Activated CD4-positive, alpha-beta T cell treated with anti-CD3 and anti-CD28 coated beads for 36 hours (primary cell): ENCODE measurements at regions of chr7 and their contacts with region 1.

Region 1: GRCh38 chr7:158655931-158656441 is 48.6 kb downstream of the NCAPG2 start:
- DNase-seq: peak; percentile 87
- ATAC-seq: peak; percentile 93
- H3K4me3 Mint-ChIP-seq: no peak overlapping the region
- H3K27ac Mint-ChIP-seq: peak overlapping the region; percentile 83
- H3K4me1 Mint-ChIP-seq: peaks cover 31% of the 10 kb centered on the region
- H3K27me3 Mint-ChIP-seq: no peaks in the 10 kb centered on the region

Region 2: DNA sequence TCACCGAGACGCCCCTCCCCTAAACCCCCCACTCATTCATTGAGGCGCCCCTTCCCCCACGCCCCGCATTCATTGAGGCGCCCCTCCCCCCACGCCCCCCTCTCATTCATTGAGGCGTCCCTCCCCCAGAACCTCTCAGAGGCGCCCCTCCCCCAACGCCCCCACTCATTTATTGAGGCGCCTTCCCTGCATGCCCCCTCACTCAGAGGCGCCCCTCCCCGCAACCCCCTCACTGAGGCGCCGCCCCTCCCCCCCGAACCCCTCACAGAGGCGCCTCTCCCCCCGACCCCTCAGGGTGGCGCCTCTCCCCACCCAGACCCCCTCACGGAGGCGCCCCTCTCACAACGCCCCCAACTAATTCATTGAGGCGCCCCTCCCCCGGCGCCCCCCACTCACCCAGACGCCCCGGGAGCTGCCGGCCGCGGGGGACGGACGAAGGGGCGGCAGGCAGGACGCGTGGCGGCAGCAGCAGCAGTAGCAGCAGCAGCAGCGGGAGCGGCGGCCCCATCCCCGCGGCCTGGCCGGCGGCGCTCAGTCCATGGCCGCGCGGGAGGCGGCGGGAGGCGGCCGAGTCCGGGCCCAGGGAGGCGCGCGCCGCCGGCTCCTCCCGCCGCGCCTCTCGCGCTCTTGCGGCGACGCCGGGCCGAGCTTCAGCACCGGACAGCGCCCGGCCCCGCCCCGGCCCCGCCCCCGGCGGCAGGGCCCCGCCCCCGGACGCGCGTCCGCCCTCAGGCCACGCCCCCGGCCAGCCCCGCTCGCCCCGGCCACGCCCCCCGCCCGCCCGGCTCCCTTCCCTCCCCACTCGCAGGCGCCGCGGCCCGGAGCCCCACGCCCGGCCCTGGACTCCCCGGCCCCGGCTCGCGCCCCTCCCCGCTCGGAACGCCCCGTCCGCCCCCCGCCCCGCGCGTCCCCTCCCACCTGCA is 68.6 kb before region 1 on chr7 and contains the start of gene PTPRN2:
- CTCF ChIA-PET with region 1: no interaction called
- POLR2A ChIA-PET with region 1: no interaction called
- intact Hi-C with region 1: loop called in 1 of 2 experiments (anchors 2 kb)
- DNase-seq: peak; percentile 83
- ATAC-seq: peak; percentile 87
- H3K4me3 Mint-ChIP-seq: peak within 1 kb of the TSS; percentile 38
- H3K27ac Mint-ChIP-seq: no peak within 1 kb of the TSS
- H3K4me1 Mint-ChIP-seq: peaks cover 4% of the 10 kb centered on the region
- H3K27me3 Mint-ChIP-seq: peaks cover 44% of the 10 kb centered on the region
- total RNA-seq, gene PTPRN2: 0.46 to 0.51 TPM

Region 3: GRCh38 chr7:158613481-158613880 is 42.5 kb before region 1 on chr7:
- CTCF ChIA-PET with region 1: no interaction called
- POLR2A ChIA-PET with region 1: no interaction called
- intact Hi-C with region 1: loop called in 1 of 2 experiments (anchors 1 kb)
- DNase-seq: no peak
- ATAC-seq: peak; percentile 67
- H3K4me3 Mint-ChIP-seq: no peak overlapping the region
- H3K27ac Mint-ChIP-seq: no peak overlapping the region
- H3K4me1 Mint-ChIP-seq: peaks cover 19% of the 10 kb centered on the region
- H3K27me3 Mint-ChIP-seq: no peaks in the 10 kb centered on the region

Region 4: DNA sequence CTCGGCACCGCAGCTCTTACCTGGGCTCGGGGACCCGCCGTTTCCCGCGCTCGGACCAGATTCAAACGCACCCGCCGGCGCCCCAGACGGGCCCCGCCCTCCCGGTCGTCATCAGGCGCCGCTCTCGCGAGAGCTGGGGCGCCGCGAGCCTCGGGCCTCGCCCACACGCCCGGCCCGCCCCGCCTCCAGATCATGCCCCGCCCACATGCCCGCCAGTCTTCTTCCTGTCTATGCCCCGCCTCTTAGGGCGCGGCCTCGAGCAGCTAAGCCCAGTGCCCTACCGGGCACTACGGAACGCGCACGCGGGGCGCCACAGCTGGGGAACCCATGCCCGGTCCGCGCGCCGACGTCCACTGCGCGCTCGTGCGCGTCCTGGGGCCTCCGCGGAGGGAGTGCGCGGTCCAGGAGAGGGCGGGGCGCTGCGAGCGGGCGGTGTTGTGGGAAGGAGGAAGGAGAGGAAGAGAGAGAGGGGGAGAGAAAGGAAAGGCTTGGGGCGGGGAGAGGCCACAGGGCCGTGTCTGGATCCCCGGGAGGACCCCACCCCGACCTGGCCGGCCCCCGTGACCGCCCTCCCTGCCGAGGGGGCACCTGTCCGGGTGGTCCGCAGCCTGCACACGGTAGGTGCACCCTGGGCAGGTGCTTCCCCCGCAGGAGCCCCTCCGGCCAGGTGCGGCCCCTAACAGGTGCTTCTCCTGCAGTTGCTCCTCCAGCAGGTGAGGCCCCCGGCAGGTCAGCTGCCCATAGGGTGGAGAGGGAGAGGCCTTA is 48.9 kb after region 1 on chr7 and contains the start of gene NCAPG2:
- CTCF ChIA-PET with region 1: no interaction called
- POLR2A ChIA-PET with region 1: interaction called, 5 read pairs
- intact Hi-C with region 1: loop called (anchors 1 kb)
- DNase-seq: peak; percentile 99
- ATAC-seq: peak; percentile 98
- H3K4me3 Mint-ChIP-seq: peak within 1 kb of the TSS; percentile 85
- H3K27ac Mint-ChIP-seq: peak within 1 kb of the TSS; percentile 81
- H3K4me1 Mint-ChIP-seq: peaks cover 44% of the 10 kb centered on the region
- H3K27me3 Mint-ChIP-seq: no peaks in the 10 kb centered on the region
- total RNA-seq, gene NCAPG2: 85.4 to 127 TPM

Region 5: GRCh38 chr7:158740013-158740656 is 84.1 kb after region 1 on chr7:
- CTCF ChIA-PET with region 1: no interaction called
- POLR2A ChIA-PET with region 1: no interaction called
- intact Hi-C with region 1: no loop called
- DNase-seq: no peak
- ATAC-seq: no peak
- H3K4me3 Mint-ChIP-seq: no peak overlapping the region
- H3K27ac Mint-ChIP-seq: peak overlapping the region; percentile 83
- H3K4me1 Mint-ChIP-seq: peaks cover 10% of the 10 kb centered on the region
- H3K27me3 Mint-ChIP-seq: no peaks in the 10 kb centered on the region

Region 6: DNA sequence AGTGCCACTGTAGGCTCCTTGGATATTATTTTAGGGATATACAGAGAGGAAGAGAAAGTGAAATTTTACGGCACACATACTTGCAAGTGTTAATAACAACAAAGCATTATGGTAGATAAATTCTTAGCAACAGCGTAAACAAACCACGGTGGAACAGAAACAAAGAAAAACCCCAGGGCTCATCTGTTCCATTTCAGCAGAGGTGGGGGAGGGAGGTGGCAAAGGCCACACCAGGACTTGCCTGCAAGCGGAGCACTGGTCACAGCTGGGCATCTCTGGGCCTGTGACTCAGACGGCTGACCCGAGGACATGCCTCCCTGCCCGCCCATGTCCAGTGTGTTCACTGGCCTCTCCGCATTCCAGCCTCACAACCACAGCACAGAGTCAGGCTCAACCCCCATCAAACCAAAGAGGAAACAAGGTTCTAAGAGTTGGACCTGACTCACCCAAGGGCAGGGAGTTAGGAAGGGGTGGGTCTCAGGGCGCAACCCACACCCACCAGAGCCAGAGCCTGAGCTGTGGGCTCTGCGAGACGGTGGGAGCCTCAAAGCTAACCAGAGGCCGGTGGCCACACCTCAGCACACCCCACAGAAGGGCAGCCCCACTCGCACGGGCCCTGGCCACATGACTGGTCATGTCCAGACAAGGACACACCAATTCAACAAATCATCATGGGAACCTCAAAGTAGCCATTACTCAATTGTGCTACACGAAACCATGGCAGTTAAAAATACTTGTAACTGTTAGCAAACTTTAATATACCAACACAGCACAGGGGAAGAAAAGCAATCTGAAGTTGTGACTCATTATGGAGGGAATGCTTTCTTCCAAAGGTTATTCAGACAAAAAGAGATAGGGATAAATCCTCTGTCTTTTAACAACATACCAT is 162.6 kb after region 1 on chr7:
- CTCF ChIA-PET with region 1: no interaction called
- POLR2A ChIA-PET with region 1: no interaction called
- intact Hi-C with region 1: loop called in 1 of 2 experiments (anchors 1 kb)
- DNase-seq: peak; percentile 85
- ATAC-seq: peak; percentile 74
- H3K4me3 Mint-ChIP-seq: peak overlapping the region; percentile 73
- H3K27ac Mint-ChIP-seq: peak overlapping the region; percentile 93
- H3K4me1 Mint-ChIP-seq: peaks cover 87% of the 10 kb centered on the region
- H3K27me3 Mint-ChIP-seq: no peaks in the 10 kb centered on the region

Region 7: GRCh38 chr7:158856883-158857668 is 201.1 kb after region 1 on chr7:
- CTCF ChIA-PET with region 1: no interaction called
- POLR2A ChIA-PET with region 1: no interaction called
- intact Hi-C with region 1: loop called in 1 of 2 experiments (anchors 2 kb)
- DNase-seq: no peak
- ATAC-seq: no peak
- H3K4me3 Mint-ChIP-seq: peak overlapping the region; percentile 92
- H3K27ac Mint-ChIP-seq: no peak overlapping the region
- H3K4me1 Mint-ChIP-seq: peaks cover 26% of the 10 kb centered on the region
- H3K27me3 Mint-ChIP-seq: no peaks in the 10 kb centered on the region

Region 8: DNA sequence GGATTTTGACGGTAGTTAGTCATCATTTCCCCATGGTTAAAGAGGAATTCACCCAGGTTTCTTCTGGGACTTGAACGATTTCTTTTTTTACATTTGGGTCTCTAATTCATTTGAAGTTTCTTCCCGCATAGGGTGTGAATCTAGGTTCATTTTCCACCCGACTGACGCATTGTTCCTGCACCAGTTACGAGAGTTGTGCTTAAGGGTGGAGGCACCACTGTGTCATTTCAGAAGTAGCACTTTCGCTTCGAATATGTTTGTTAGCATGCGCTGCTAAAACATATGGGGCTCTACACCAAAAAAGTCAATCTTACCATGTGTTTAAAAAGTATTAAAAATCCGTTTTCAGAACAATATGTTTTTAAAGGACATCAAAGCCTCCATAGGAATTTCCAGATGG is 348.4 kb after region 1 on chr7:
- CTCF ChIA-PET with region 1: no interaction called
- POLR2A ChIA-PET with region 1: no interaction called
- intact Hi-C with region 1: loop called (anchors 1 kb)
- DNase-seq: peak; percentile 76
- ATAC-seq: peak; percentile 97
- H3K4me3 Mint-ChIP-seq: no peak overlapping the region
- H3K27ac Mint-ChIP-seq: peak overlapping the region; percentile 82
- H3K4me1 Mint-ChIP-seq: peaks cover 21% of the 10 kb centered on the region
- H3K27me3 Mint-ChIP-seq: peaks cover 15% of the 10 kb centered on the region